ENCODE measurements at regions of chr2 and their contacts with region 1.

Region 1: DNA sequence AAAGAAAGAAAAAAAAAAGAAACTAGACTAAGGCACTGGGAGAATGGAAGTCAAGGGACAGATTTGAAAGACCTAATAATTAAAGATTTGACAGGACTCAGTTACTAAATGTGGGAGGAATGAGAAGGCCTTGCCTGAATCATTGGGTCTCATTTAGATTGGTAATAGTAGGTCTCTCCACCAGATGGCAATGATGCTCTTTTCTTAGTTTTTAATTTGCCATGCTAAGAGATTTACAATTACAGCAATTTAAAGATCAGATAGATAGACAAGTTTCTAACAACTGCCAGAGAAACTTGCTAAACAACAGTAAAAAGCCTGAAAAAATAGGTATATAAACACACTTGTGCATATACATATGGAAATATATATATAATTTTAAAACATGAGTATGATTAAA is 153.0 kb downstream of the TMEM247 start:
- DNase-seq: peak; percentile 78
- H3K4me3 ChIP-seq: no peak overlapping the region
- H3K27ac ChIP-seq: peak overlapping the region; percentile 13
- H3K4me1 ChIP-seq: peaks cover 22% of the 10 kb centered on the region
- H3K27me3 ChIP-seq: no peaks in the 10 kb centered on the region

Region 2: GRCh38 chr2:46014911-46015654 is 617.3 kb before region 1 on chr2:
- in situ Hi-C with region 1: no loop called
- DNase-seq: peak; percentile 21
- H3K4me3 ChIP-seq: no peak overlapping the region
- H3K27ac ChIP-seq: no peak overlapping the region
- H3K4me1 ChIP-seq: peaks cover 13% of the 10 kb centered on the region; the same call in 1 of the 2 replicates
- H3K27me3 ChIP-seq: no peaks in the 10 kb centered on the region

Region 3: GRCh38 chr2:46252891-46253669 is 379.3 kb before region 1 on chr2:
- in situ Hi-C with region 1: no loop called
- DNase-seq: peak; percentile 70
- H3K4me3 ChIP-seq: no peak overlapping the region
- H3K27ac ChIP-seq: no peak overlapping the region
- H3K4me1 ChIP-seq: no peaks in the 10 kb centered on the region
- H3K27me3 ChIP-seq: no peaks in the 10 kb centered on the region

Region 4: GRCh38 chr2:46400016-46400415 is 232.3 kb before region 1 on chr2:
- in situ Hi-C with region 1: no loop called
- DNase-seq: no peak
- H3K4me3 ChIP-seq: no peak overlapping the region
- H3K27ac ChIP-seq: no peak overlapping the region
- H3K4me1 ChIP-seq: no peaks in the 10 kb centered on the region
- H3K27me3 ChIP-seq: no peaks in the 10 kb centered on the region

Region 5: DNA sequence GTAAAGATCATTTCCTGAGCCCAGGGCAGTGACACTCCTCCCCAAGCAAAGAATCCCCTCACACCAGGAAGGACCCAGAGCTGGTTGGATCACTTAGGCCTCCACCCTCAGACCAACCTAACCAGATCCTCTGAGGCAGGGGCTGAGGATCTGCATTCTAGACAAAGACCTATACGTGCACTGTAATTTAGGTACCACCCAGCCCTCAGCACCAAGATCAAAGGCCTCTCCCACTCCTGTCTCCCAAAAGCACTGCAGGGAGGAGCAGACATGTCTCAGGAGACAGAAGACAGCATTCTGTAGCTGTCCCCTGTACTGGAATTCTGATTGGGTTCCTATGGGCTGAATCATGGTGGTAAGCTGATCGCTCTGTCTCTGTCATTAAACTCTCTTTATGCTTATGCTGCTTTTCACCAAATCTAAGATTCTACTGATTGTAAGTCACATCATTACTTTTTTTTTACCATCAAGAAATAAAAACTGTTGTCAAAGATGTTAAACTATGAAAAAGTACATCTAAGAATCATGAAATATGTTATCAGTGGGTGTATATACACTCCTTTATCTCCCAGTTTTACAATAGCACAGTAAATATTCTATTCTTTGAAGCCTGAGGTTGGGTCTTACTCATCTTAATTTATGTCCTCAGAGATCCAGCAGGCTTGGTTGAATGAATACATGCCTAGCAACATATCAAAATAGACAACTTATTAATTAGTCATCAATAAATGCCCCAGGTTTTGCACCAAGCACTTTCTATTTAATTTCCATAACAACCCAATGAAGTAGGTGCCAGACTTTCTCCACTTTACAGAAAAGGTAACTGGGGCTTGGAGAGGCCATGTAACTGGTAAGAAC is 254.9 kb after region 1 on chr2:
- in situ Hi-C with region 1: loop called (anchors 5 kb)
- DNase-seq: peak; percentile 70
- H3K4me3 ChIP-seq: no peak overlapping the region
- H3K27ac ChIP-seq: peak overlapping the region; percentile 85
- H3K4me1 ChIP-seq: peaks cover 67% of the 10 kb centered on the region
- H3K27me3 ChIP-seq: no peaks in the 10 kb centered on the region

Region 6: GRCh38 chr2:47323009-47323821 is 690.9 kb after region 1 on chr2:
- in situ Hi-C with region 1: loop called (anchors 25 kb)
- DNase-seq: peak; percentile 85
- H3K4me3 ChIP-seq: no peak overlapping the region
- H3K27ac ChIP-seq: no peak overlapping the region
- H3K4me1 ChIP-seq: 0 out of 2 replicates have a peak, but pooled peaks cover 4% of the 10 kb centered on the region
- H3K27me3 ChIP-seq: no peaks in the 10 kb centered on the region

Measured in GM23248 (cell line).